ENCODE measurements at regions of chr11 and their contacts with region 1.

Region 1: DNA sequence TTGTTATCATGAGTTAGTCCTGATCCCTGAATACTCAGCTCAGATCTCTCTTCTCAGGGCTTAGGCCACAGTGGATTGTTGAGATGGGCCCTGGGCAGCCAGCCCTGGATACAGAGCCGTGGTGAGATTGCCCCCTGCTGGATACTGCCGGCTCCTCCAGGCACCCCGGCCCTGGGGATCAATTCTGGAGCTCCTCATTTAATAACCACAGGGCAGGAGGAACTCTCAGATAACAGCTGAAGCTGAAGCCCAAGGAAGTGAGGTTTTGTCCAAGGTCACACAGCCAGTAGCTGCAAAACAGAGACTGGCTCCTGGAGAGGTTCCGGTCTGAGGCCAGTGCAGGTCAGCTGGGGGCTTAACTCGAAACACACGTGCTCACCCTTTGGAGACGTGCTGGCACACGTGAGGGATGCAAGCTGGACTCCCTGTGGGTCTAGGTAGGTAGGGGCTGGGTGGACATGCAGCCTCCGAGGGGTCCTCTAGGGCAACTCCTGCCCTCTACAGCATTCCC is 16.0 kb downstream of the USH1C start:
- DNase-seq: peak; percentile 42
- H3K4me3 ChIP-seq: no peak overlapping the region
- H3K27ac ChIP-seq: no peak overlapping the region
- H3K4me1 ChIP-seq: no peaks in the 10 kb centered on the region
- H3K27me3 ChIP-seq: peaks cover 2 to 3% of the 10 kb centered on the region in 2 experiments
- CTCF ChIP-seq: peak; percentile 80 to 81
- POLR2A ChIP-seq: no peak

Region 2: DNA sequence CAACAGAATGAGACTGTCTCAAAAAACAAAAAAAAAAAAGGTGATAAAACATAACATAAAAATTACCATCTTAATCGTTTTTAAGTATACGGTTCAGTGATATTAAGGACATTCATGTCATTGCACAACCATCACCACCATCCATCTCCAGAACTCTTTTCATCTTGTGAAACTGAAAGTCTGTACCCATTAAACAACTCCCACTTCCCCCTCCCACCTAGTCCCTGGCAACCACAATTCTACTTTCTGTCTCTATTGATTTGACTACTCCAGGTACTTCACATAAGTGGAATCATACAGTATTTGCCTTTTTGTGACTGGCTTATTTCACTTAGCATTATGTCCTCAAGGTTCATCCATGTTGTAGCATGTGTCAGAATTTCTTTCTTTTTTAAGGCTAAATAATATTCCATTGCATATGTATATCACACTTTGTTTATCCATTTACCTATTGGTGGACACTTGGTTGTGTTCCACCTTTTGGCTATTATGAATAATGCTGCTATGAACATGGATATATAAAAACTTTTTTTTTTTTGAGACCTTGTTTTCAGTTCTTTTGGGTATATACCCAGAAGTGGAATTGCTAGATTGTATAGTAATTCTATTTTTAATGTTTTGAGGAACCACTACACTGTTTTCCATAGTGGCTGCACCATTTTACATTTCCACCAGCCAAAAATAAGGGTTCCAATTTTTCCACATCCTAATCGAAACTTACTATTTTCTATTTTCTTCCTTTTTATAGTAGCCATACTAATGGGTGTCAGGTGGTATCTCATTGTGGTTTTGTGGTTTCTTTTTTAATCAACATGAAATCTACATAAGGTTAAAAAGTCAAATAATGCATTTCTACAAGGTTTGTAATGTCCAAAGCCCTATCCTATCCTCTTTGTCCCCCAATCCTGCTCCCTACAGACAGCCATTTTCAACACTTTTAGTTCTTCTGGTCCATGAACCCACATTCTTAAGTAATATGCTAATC is 297.1 kb before region 1 on chr11:
- CTCF ChIA-PET with region 1: interaction called, 14 read pairs
- POLR2A ChIA-PET with region 1: no interaction called
- dilution Hi-C with region 1: no loop called
- intact Hi-C with region 1: loop called (anchors 1 kb)
- DNase-seq: no peak
- H3K4me3 ChIP-seq: no peak overlapping the region
- H3K27ac ChIP-seq: no peak overlapping the region
- H3K4me1 ChIP-seq: peaks cover 3% of the 10 kb centered on the region
- H3K27me3 ChIP-seq: no peaks in the 10 kb centered on the region
- CTCF ChIP-seq: no peak
- POLR2A ChIP-seq: no peak

Region 3: GRCh38 chr11:17384002-17384511 is 144.2 kb before region 1 on chr11:
- CTCF ChIA-PET with region 1: interaction called, 128 read pairs
- POLR2A ChIA-PET with region 1: no interaction called
- dilution Hi-C with region 1: no loop called
- intact Hi-C with region 1: loop called (anchors 1 kb)
- DNase-seq: peak; percentile 66
- H3K4me3 ChIP-seq: no peak overlapping the region
- H3K27ac ChIP-seq: no peak overlapping the region
- H3K4me1 ChIP-seq: no peaks in the 10 kb centered on the region
- H3K27me3 ChIP-seq: no peaks in the 10 kb centered on the region
- CTCF ChIP-seq: peak; percentile 82 to 87
- POLR2A ChIP-seq: no peak

Region 4: GRCh38 chr11:17504330-17505107 is 23.7 kb before region 1 on chr11:
- CTCF ChIA-PET with region 1: interaction called, 20 read pairs
- POLR2A ChIA-PET with region 1: no interaction called
- dilution Hi-C with region 1: no loop called
- intact Hi-C with region 1: no loop called
- DNase-seq: peak; percentile 60
- H3K4me3 ChIP-seq: no peak overlapping the region
- H3K27ac ChIP-seq: no peak overlapping the region
- H3K4me1 ChIP-seq: no peaks in the 10 kb centered on the region
- H3K27me3 ChIP-seq: no peaks in the 10 kb centered on the region
- CTCF ChIP-seq: peak; percentile 78 to 90
- POLR2A ChIP-seq: no peak

Region 5: GRCh38 chr11:17513853-17514252 is 14.4 kb before region 1 on chr11:
- CTCF ChIA-PET with region 1: interaction called, 26 read pairs
- POLR2A ChIA-PET with region 1: interaction called, 3 read pairs
- dilution Hi-C with region 1: no loop called
- intact Hi-C with region 1: no loop called
- DNase-seq: no peak
- H3K4me3 ChIP-seq: no peak overlapping the region
- H3K27ac ChIP-seq: no peak overlapping the region
- H3K4me1 ChIP-seq: no peaks in the 10 kb centered on the region
- H3K27me3 ChIP-seq: no peaks in the 10 kb centered on the region
- CTCF ChIP-seq: no peak
- POLR2A ChIP-seq: no peak

Region 6: GRCh38 chr11:17542249-17542648 is 14.0 kb after region 1 on chr11:
- CTCF ChIA-PET with region 1: interaction called, 11 read pairs
- POLR2A ChIA-PET with region 1: no interaction called
- dilution Hi-C with region 1: no loop called
- intact Hi-C with region 1: no loop called
- DNase-seq: no peak
- H3K4me3 ChIP-seq: no peak overlapping the region
- H3K27ac ChIP-seq: no peak overlapping the region
- H3K4me1 ChIP-seq: no peaks in the 10 kb centered on the region
- H3K27me3 ChIP-seq: peaks cover 9 to 13% of the 10 kb centered on the region in 2 experiments
- CTCF ChIP-seq: no peak
- POLR2A ChIP-seq: no peak

Measured in endothelial cell of umbilical vein (primary cell).